ENCODE measurements at regions of chr7 and their contacts with region 1.

Region 1: DNA sequence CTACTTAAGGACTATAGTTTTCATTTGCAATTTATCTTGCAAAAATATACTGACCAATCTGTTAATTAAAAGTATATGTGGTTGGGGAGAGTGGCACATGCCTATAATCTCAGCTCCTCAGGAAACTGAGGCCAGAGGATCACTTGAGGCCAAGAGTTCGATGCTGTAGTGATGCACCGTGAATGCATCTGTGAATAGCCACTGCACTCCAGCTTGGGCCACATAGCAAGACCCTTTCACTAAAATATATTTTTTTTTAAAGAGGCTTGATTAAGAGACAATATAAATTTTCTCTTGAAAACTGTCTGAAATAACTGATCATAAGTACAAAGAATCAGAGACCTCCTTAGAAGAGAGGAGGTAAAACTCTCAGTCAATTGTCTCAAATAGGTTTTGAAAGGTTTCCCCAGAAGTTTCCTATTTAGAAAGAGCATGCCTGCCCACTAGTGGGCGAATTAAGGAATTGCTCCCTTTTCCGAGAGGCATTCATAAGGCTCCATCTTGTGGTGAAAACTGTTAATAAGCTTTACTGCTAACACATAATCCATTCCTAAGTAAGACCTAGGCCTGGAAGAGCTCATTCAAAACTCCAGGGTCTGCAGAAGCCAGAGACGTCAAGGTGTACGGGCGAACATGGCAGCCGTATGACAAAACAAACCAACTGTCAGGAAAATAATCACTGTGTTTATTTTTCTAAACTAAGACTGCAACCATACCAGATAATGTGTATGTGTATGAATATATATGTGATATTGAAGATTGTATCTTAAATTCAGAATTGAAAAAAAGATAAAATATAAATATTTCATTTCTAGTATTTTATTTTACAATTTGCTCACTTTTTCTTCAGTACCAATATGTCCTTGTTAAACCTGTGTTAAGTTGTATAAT is 6.8 kb upstream of the TAS2R40 start:
- DNase-seq: peak in 4 of 5 donors; percentile 31 to 48 (median 40)
- ATAC-seq: peak in 3 of 4 donors; percentile 70 to 78 (median 73)
- H3K4me3 ChIP-seq: no peak overlapping the region
- H3K27ac ChIP-seq: no peak overlapping the region
- H3K4me1 ChIP-seq: no peaks in the 10 kb centered on the region
- H3K27me3 ChIP-seq: peaks cover 0 to 2% (median 0%) of the 10 kb centered on the region in 9 donors
- CTCF ChIP-seq: peak; percentile 98 to 100 (median 100)
- POLR2A ChIP-seq: no peak

Region 2: GRCh38 chr7:142603870-142604448 is 611.1 kb before region 1 on chr7:
- intact Hi-C with region 1: loop called in 1 of 10 experiments (anchors 10 kb)
- DNase-seq: no peak
- ATAC-seq: no peak
- H3K4me3 ChIP-seq: no peak overlapping the region
- H3K27ac ChIP-seq: no peak overlapping the region
- H3K4me1 ChIP-seq: no peaks in the 10 kb centered on the region
- H3K27me3 ChIP-seq: peaks cover 0 to 40% (median 5%) of the 10 kb centered on the region in 9 donors
- CTCF ChIP-seq: peak; percentile 66 to 83 (median 72)
- POLR2A ChIP-seq: no peak

Region 3: DNA sequence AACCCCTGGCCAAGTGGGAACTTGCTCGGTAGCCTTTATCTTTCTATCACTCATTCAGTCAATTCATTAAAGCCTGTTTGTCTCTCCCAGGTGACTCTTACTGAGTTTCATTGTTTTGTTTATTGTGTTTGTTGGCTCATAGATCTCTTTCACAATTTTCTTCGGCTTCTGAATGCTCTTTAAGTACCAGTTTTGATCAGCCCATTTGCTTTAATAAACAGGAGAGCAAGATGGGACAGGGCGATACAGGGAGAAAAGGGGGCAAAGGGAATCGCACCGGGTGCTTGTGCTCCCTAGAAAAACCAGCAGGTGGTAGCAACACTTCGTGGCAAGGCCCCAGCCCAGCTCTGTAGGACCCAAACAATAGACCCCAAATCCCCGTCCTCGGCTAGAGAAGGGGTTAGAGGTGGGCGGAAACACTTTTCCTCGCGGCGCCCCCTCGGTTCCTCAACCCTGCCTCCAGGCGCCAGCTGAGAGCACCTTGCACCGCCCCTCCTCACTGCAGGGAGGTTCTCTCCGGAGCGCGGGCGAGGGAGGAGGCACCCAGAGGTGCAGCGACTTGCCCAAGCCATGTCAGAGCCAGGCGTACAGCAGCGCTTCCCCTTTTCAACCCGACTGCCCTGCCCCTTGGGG is 361.2 kb before region 1 on chr7:
- intact Hi-C with region 1: loop called in 9 of 10 experiments (anchors 2 to 10 kb)
- DNase-seq: peak; percentile 41 to 80 (median 63)
- ATAC-seq: peak; percentile 57 to 81 (median 76)
- H3K4me3 ChIP-seq: peak overlapping the region; percentile 39 to 86 (median 68)
- H3K27ac ChIP-seq: peak overlapping the region in 9 of 12 donors; percentile 12 to 69 (median 61)
- H3K4me1 ChIP-seq: peaks cover 0 to 28% (median 9%) of the 10 kb centered on the region in 12 donors
- H3K27me3 ChIP-seq: peaks cover 0 to 16% (median 0%) of the 10 kb centered on the region in 9 donors
- CTCF ChIP-seq: peak; percentile 50 to 88 (median 72)
- POLR2A ChIP-seq: no peak

Region 4: DNA sequence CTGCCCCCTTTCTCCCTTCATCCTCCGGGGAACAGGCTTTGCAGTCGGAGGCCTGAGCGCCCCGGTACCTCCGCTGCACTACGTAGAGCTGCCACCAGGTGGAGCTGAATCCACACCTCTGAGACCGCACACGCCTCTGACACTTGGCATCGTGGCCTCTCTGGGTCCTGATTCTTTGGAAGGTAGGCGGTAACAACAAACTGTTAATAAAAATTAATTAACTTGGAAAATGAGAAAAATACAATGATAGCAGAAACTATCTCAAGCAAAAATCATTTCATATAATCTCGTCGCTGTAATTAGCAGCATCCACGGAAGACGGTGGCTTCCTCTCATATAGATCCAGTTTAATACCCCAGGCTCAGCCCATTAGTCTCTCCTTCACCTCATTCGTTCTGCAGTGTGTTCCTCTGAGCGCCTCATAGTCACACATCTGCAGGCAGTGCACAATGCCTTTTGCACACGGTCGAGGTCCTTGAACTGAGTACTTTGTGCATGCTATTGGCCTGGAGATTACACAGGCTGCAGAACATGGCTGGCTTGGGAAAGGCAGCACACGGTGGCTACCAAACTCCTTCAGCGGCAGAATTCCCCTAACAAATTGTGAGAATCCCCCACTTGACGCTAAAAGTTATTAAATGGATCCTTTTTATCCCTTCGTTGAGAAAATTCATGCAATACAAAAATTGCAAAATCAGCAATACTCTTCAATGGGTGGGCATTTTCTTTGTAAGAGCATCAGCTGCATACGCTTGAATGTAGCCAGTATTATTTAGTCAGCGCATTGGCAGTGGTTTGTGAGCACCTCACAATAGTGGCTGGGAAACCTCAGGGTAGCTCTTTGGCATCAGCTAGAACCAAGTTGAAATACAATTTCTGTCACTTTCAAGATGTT is 206.8 kb before region 1 on chr7:
- intact Hi-C with region 1: loop called (anchors 1 to 2 kb)
- DNase-seq: peak; percentile 62 to 88 (median 80)
- ATAC-seq: peak; percentile 71 to 93 (median 89)
- H3K4me3 ChIP-seq: no peak overlapping the region
- H3K27ac ChIP-seq: no peak overlapping the region
- H3K4me1 ChIP-seq: peaks cover 0 to 3% (median 0%) of the 10 kb centered on the region in 12 donors
- H3K27me3 ChIP-seq: peaks cover 0 to 7% (median 0%) of the 10 kb centered on the region in 9 donors
- CTCF ChIP-seq: peak; percentile 92 to 98 (median 96)
- POLR2A ChIP-seq: no peak

Region 5: GRCh38 chr7:143013893-143014292 is 201.1 kb before region 1 on chr7:
- intact Hi-C with region 1: loop called in 4 of 10 experiments (anchors 1 to 2 kb)
- DNase-seq: no peak
- ATAC-seq: peak in 1 of 4 donors; percentile 33
- H3K4me3 ChIP-seq: no peak overlapping the region
- H3K27ac ChIP-seq: peak overlapping the region in 3 of 12 donors; percentile 7 to 37 (median 25)
- H3K4me1 ChIP-seq: peaks cover 0 to 9% (median 0%) of the 10 kb centered on the region in 12 donors
- H3K27me3 ChIP-seq: no peaks in the 10 kb centered on the region
- CTCF ChIP-seq: no peak
- POLR2A ChIP-seq: no peak

Region 6: DNA sequence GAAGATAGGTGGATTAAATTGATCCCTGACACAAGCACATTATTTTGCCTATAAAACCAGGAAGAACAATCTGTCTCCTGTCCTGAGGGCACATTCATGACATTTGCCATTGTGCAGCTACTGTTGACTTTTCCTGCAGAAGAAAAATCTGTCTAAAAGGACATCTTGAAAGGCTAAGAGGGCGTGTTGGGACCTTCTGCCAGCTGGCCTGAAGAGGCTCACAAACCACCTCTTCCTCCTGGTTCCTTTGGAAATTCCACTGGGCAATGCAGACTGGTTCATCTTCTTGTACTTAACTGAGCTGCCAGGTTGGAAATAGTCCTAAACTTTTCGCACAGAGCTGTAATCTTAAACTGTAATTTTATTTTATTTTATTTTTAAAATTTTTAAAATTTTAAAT is 118.9 kb before region 1 on chr7:
- intact Hi-C with region 1: no loop called
- DNase-seq: no peak
- ATAC-seq: no peak
- H3K4me3 ChIP-seq: no peak overlapping the region
- H3K27ac ChIP-seq: no peak overlapping the region
- H3K4me1 ChIP-seq: no peaks in the 10 kb centered on the region
- H3K27me3 ChIP-seq: no peaks in the 10 kb centered on the region
- CTCF ChIP-seq: no peak
- POLR2A ChIP-seq: no peak

Region 7: DNA sequence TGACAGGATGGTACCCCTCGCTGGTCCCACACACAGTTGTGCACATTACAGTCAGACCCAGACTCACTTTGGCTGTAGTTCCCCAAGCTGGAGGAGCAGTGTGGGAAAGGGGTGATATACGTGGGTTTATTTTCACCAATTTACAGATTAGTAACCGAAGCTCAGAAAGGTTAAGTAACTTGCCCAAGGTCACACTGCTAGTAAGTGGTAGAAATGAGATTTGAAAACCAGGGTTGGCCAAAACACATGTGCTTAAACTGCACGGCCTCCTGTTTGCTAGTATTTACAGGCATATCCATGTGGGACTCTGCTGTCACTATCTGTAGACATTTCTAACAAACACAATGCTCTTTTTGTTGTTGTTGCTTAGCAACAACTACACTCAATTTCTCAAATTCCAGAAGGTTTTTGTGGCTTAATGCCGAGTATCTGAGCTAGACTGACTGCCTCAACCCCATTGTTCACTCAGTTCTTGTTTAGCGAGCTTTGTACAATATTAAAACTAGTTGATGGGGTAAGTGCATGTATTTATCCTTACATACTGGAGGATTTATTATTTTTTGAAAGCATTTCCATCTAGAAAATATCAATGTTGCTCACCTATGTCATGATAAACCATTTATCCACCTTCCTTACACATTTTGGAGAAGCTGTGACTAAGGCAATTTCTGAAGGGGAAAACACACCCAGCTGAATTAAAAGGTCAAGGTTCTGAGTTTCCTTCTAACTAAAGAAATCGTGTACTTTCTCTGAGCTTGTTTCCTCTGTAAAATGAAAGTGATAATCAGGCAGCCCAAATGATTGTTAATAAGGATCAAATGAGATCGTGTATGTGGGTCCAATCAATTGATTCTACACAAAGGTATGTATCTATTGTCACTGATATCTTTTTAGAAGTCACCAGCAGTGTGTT is 64.4 kb after region 1 on chr7:
- intact Hi-C with region 1: no loop called
- DNase-seq: no peak
- ATAC-seq: peak; percentile 28 to 81 (median 62)
- H3K4me3 ChIP-seq: peak overlapping the region in 6 of 12 donors; percentile 7 to 29 (median 19)
- H3K27ac ChIP-seq: peak overlapping the region; percentile 35 to 81 (median 56)
- H3K4me1 ChIP-seq: peaks cover 0 to 38% (median 18%) of the 10 kb centered on the region in 12 donors
- H3K27me3 ChIP-seq: no peaks in the 10 kb centered on the region
- CTCF ChIP-seq: no peak
- POLR2A ChIP-seq: no peak

Measured in heart left ventricle (tissue), 16 donors.